ENCODE measurements at regions of chr7 and their contacts with region 1.

Region 1: GRCh38 chr7:90312745-90313144 is 8.4 kb downstream of the FAM237B start:
- DNase-seq: no peak
- H3K4me3 Mint-ChIP-seq: no peak overlapping the region
- H3K27ac Mint-ChIP-seq: no peak overlapping the region
- H3K4me1 Mint-ChIP-seq: no peaks in the 10 kb centered on the region
- H3K27me3 Mint-ChIP-seq: peaks cover 15% of the 10 kb centered on the region

Region 2: DNA sequence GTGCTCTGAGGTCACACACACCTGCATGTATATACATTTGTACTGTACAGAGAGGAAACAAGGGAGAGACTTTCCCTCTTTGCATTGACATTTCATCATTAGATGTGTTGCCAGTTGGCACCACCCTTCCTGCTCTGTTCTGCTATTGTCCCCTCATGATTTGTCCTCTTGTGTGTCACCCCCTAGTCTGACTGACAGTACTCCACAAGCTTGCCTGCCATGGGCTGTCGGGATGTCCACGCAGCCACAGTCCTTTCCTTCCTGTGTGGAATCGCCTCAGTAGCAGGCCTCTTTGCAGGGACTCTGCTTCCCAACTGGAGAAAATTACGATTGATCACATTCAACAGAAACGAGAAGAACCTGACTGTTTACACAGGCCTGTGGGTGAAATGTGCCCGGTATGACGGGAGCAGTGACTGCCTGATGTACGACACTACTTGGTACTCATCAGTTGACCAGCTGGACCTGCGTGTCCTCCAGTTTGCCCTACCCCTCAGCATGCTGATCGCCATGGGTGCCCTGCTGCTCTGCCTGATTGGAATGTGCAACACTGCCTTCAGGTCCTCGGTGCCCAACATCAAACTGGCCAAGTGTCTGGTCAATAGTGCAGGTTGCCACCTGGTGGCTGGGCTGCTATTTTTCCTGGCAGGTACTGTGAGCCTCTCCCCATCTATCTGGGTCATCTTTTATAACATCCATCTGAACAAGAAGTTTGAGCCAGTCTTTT is 99.9 kb after region 1 on chr7:
- CTCF ChIA-PET with region 1: no interaction called
- intact Hi-C with region 1: loop called (anchors 1 kb)
- DNase-seq: peak; percentile 46
- H3K4me3 Mint-ChIP-seq: no peak overlapping the region
- H3K27ac Mint-ChIP-seq: no peak overlapping the region
- H3K4me1 Mint-ChIP-seq: no peaks in the 10 kb centered on the region
- H3K27me3 Mint-ChIP-seq: no peaks in the 10 kb centered on the region